MCF 10A (cell line): ENCODE measurements at regions of chr9 and their contacts with region 1.

Region 1: DNA sequence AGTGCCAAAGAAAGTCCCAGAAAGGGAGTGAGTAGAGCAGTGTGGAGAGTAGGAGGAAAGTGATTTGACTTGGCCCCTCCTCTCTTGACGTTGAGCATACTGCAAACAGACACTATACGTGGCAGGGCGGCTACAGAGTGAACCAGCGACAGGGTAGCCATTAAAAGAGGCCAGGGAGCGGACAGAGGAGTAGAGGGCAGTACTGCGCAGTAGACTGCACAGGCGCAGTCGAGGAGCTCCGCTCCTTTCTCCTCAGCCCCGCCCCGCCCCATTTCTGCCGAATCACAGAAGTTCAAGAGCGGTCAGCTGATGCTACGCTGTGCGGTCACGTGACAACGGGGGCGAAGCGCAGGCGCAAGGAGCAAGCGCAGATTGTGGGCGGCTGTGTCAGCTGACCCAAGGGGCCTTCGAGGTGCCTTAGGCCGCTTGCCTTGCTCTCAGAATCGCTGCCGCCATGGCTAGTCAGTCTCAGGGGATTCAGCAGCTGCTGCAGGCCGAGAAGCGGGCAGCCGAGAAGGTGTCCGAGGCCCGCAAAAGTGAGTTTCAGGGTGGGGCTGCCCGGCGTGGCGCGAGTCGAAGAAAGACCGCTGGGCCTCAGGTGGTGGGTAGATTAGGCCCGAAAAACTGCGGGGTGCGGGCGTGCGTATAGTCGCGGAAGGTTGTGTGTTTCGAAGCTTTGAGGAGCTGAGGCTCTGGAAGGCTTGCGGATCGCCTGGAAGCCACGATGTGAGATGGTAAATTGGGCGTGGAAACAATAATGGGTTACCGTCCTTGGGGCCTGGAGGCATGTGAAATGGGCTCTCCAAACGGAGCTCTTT is at the start of gene ATP6V1G1:
- DNase-seq: peak; percentile 99
- H3K4me3 Mint-ChIP-seq: peak within 1 kb of the TSS; percentile 100
- H3K27ac Mint-ChIP-seq: peak within 1 kb of the TSS; percentile 100
- H3K4me1 Mint-ChIP-seq: peaks cover 35% of the 10 kb centered on the region
- H3K27me3 Mint-ChIP-seq: no peaks in the 10 kb centered on the region
- CTCF ChIP-seq: no peak
- total RNA-seq, gene ATP6V1G1: 87.1 and 118 TPM in 2 replicates

Region 2: GRCh38 chr9:114505187-114506081 is 82.2 kb before region 1 on chr9 and contains the start of gene WHRN:
- CTCF ChIA-PET with region 1: interaction called, 5 read pairs
- POLR2A ChIA-PET with region 1: interaction called, 110 read pairs
- intact Hi-C with region 1: loop called (anchors 5 kb)
- DNase-seq: peak; percentile 86
- H3K4me3 Mint-ChIP-seq: peak within 1 kb of the TSS; percentile 85
- H3K27ac Mint-ChIP-seq: peak within 1 kb of the TSS; percentile 94
- H3K4me1 Mint-ChIP-seq: peaks cover 27% of the 10 kb centered on the region
- H3K27me3 Mint-ChIP-seq: peaks cover 29% of the 10 kb centered on the region
- CTCF ChIP-seq: no peak
- total RNA-seq, gene WHRN: 9.4 and 12.8 TPM in 2 replicates

Region 3: DNA sequence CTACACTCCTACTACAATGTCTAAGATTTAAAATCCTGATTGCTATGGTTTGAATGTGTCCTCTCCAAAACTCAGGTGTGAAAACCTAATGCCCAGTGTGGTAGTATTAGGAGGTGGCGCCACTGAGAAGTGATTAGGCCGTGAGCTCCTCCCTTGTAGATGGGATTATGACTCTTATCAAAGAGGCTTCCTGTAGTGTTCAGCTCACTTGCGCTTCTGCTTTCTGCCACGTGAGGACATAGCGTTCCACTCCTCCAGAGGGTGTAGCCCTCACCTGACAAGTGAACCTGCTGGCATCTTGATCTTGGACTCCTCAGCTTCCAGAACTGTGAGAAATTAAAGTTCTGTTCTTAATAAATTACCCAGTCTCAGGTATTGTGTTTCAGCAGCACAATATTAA is 49.4 kb before region 1 on chr9:
- CTCF ChIA-PET with region 1: interaction called, 5 read pairs
- POLR2A ChIA-PET with region 1: interaction called, 27 read pairs
- intact Hi-C with region 1: no loop called
- DNase-seq: peak; percentile 34
- H3K4me3 Mint-ChIP-seq: no peak overlapping the region
- H3K27ac Mint-ChIP-seq: no peak overlapping the region
- H3K4me1 Mint-ChIP-seq: no peaks in the 10 kb centered on the region
- H3K27me3 Mint-ChIP-seq: no peaks in the 10 kb centered on the region
- CTCF ChIP-seq: no peak

Region 4: DNA sequence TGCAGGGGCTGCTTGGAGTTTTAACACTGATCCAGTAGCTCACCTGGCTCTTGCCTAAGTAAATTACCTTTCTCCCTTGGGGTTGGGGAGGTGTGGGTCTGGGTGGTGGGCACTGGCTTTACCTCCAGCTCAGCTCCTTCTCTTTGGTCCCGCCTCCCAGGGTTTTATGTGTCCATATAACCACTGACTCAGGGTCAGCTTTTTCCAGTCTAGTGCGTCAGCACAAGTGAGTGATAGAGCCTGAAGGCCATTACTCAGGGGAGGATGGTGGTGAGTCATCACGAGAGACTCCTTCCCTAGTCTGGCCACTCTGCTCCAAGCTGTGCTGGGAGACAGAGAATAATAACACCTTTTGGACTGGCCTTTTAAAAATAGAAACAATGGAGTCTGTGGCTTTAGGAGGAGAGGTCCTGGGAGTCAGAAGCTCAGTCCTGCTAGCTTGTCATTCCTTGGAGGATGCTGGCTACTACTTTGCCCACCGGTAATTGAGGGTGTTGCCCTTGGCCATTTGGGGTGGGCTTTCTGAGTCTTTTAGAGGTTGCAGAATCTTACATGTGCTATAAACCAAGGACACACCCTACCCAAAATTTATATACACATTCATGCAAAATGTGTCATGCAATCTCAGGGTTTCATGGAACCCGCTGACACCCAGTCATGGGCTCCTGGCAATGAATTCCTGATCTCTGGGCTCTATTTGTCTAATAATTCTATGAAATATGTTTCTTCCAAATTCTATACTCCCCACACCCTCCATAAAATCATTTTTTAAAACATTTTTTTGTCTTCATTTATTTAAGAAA is 35.5 kb before region 1 on chr9:
- CTCF ChIA-PET with region 1: no interaction called
- POLR2A ChIA-PET with region 1: interaction called, 28 read pairs
- intact Hi-C with region 1: loop called (anchors 2 kb)
- DNase-seq: peak; percentile 97
- H3K4me3 Mint-ChIP-seq: no peak overlapping the region
- H3K27ac Mint-ChIP-seq: peak overlapping the region; percentile 91
- H3K4me1 Mint-ChIP-seq: peaks cover 18% of the 10 kb centered on the region
- H3K27me3 Mint-ChIP-seq: peaks cover 8% of the 10 kb centered on the region
- CTCF ChIP-seq: no peak

Region 5: GRCh38 chr9:114574438-114574837 is 13.2 kb before region 1 on chr9:
- CTCF ChIA-PET with region 1: interaction called, 4 read pairs
- POLR2A ChIA-PET with region 1: interaction called, 24 read pairs
- intact Hi-C with region 1: no loop called
- DNase-seq: no peak
- H3K4me3 Mint-ChIP-seq: no peak overlapping the region
- H3K27ac Mint-ChIP-seq: no peak overlapping the region
- H3K4me1 Mint-ChIP-seq: no peaks in the 10 kb centered on the region
- H3K27me3 Mint-ChIP-seq: no peaks in the 10 kb centered on the region
- CTCF ChIP-seq: no peak

Region 6: GRCh38 chr9:114611516-114612271 is 24.1 kb after region 1 on chr9:
- CTCF ChIA-PET with region 1: interaction called, 8 read pairs
- POLR2A ChIA-PET with region 1: interaction called, 53 read pairs
- intact Hi-C with region 1: no loop called
- DNase-seq: peak; percentile 61
- H3K4me3 Mint-ChIP-seq: peak overlapping the region; percentile 80
- H3K27ac Mint-ChIP-seq: peak overlapping the region; percentile 71
- H3K4me1 Mint-ChIP-seq: peaks cover 19% of the 10 kb centered on the region
- H3K27me3 Mint-ChIP-seq: no peaks in the 10 kb centered on the region
- CTCF ChIP-seq: no peak